Breast epithelium (tissue), 4 donors: ENCODE measurements at regions of chr12 and their contacts with region 1.

Region 1: GRCh38 chr12:56596815-56597214 is 33.3 kb downstream of the BAZ2A start:
- DNase-seq: no peak
- H3K4me3 ChIP-seq: no peak overlapping the region
- H3K27ac ChIP-seq: peak overlapping the region in 1 of 2 donors; percentile 35
- H3K4me1 ChIP-seq: no peaks in the 10 kb centered on the region
- H3K27me3 ChIP-seq: no peaks in the 10 kb centered on the region
- CTCF ChIP-seq: no peak
- POLR2A ChIP-seq: no peak

Region 2: GRCh38 chr12:56510786-56511185 is 86.0 kb before region 1 on chr12:
- intact Hi-C with region 1: loop called (anchors 5 kb)
- DNase-seq: no peak
- H3K4me3 ChIP-seq: no peak overlapping the region
- H3K27ac ChIP-seq: no peak overlapping the region
- H3K4me1 ChIP-seq: no peaks in the 10 kb centered on the region
- H3K27me3 ChIP-seq: no peaks in the 10 kb centered on the region
- CTCF ChIP-seq: no peak
- POLR2A ChIP-seq: no peak